Activated B cell treated with CpG ODN at 0.5 μM for 24 hours (primary cell): ENCODE measurements at regions of chr9 and their contacts with region 1.

Region 1: GRCh38 chr9:98255578-98256296 is at the start of gene TBC1D2:
- DNase-seq: peak; percentile 98
- ATAC-seq: peak; percentile 90
- H3K4me3 Mint-ChIP-seq: peak within 1 kb of the TSS; percentile 98
- H3K27ac Mint-ChIP-seq: peak within 1 kb of the TSS; percentile 99
- H3K4me1 Mint-ChIP-seq: peaks cover 13% of the 10 kb centered on the region
- H3K27me3 Mint-ChIP-seq: no peaks in the 10 kb centered on the region
- CTCF ChIP-seq: no peak
- total RNA-seq, gene TBC1D2: 2.1 and 2.7 TPM in 2 replicates

Region 2: DNA sequence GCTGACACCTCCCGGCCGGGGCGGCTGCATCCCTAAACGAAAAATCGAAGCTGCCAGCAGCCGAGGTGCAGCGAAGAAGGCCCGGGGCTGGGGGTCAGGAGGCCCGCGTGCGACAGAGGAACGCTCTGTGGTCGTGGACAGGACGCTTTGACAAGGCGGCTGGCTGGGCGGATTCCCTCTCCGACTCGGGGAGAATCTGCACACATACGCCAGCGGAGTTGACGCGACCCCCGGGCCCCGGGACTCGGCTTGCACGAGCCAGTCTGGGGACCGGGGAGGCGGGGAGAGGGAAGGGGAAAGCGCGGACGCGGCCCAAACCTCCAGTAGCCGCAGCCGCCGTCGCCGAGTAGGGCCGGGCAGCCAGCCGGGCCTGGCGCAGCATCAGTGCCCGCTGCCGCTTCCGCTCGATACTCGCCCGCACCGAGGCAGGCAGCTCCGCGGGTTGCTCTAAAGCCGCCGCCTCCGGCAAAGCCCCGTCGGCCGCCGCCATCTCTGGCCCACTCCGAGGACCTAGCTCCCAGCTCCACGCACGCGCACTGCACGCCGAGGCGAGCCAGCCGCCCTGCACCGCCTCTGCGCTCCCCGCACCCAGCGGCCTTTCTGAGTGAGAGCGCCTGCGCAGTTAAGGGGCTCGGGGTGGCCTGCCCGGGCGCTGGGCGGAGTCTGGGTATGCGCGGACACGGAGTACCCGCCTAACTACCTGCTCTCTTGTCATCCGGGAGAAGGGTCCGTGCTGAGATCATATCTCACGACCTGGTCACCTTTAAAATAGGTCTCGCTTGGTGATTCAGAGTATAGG is 558.7 kb before region 1 on chr9 and contains the start of gene XPA:
- CTCF ChIA-PET with region 1: no interaction called
- POLR2A ChIA-PET with region 1: interaction called, 7 read pairs
- intact Hi-C with region 1: loop called (anchors 1 kb)
- DNase-seq: peak; percentile 96
- ATAC-seq: peak; percentile 93
- H3K4me3 Mint-ChIP-seq: peak within 1 kb of the TSS; percentile 90
- H3K27ac Mint-ChIP-seq: peak within 1 kb of the TSS; percentile 94
- H3K4me1 Mint-ChIP-seq: peaks cover 60% of the 10 kb centered on the region
- H3K27me3 Mint-ChIP-seq: peaks cover 5% of the 10 kb centered on the region
- CTCF ChIP-seq: no peak
- total RNA-seq, gene XPA: 14.4 and 18.1 TPM in 2 replicates

Region 3: GRCh38 chr9:98045234-98046179 is 210.2 kb before region 1 on chr9:
- CTCF ChIA-PET with region 1: no interaction called
- POLR2A ChIA-PET with region 1: interaction called, 8 read pairs
- intact Hi-C with region 1: loop called (anchors 1 kb)
- DNase-seq: no peak
- ATAC-seq: peak; percentile 87
- H3K4me3 Mint-ChIP-seq: peak overlapping the region; percentile 83
- H3K27ac Mint-ChIP-seq: peak overlapping the region; percentile 84
- H3K4me1 Mint-ChIP-seq: peaks cover 53% of the 10 kb centered on the region
- H3K27me3 Mint-ChIP-seq: peaks cover under 1% of the 10 kb centered on the region
- CTCF ChIP-seq: no peak

Region 4: GRCh38 chr9:98074115-98074990 is 181.4 kb before region 1 on chr9:
- CTCF ChIA-PET with region 1: interaction called, 3 read pairs
- POLR2A ChIA-PET with region 1: interaction called, 11 read pairs
- intact Hi-C with region 1: no loop called
- DNase-seq: peak; percentile 58
- ATAC-seq: peak; percentile 61
- H3K4me3 Mint-ChIP-seq: no peak overlapping the region
- H3K27ac Mint-ChIP-seq: peak overlapping the region; percentile 24
- H3K4me1 Mint-ChIP-seq: peaks cover 6% of the 10 kb centered on the region
- H3K27me3 Mint-ChIP-seq: no peaks in the 10 kb centered on the region
- CTCF ChIP-seq: peak; percentile 91

Region 5: DNA sequence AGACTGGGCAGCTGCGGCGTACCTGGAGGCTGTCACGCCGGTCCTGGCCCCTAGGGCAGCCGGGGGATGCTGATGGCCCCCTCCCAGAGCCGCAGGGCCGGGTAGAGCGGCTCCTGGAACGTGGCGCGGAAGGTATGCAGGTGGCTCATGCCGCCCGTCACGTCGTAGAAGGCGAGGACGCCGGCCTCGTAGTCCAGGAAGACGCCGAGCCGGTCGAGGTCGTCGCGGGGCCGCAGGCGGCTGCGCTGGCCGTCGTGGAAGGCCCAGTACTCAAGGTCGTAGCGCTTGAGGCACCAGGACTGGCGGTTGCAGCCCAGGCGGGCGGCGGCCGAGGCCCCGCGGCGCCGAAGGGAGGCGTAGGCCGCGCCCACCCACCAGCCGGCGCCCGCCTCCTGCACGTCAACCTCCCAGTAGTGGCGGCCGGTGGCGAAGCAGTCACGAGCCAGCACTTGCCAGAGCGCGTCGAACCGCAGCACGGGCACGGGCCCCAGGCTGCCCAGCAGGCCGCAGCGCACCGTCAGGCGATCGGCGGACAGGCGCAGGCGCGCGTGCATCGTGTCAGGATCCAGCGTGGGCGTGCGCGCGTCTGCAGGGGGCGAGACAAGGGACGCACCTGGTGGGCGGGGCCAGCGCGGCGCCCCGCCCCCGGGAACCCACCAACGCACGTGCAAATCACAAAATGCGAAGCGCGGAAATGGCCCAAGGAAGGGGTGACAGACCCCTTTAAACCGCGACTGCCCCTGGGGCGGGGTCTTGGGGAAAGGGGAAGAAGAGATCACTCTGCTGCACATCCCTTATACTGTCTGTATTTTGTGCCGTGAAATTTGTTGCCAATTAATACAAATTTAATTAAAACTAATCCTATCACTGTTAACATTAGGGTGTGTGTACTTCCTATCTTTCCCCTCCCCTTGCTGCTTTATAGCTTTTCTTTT is 168.1 kb before region 1 on chr9:
- CTCF ChIA-PET with region 1: no interaction called
- POLR2A ChIA-PET with region 1: no interaction called
- intact Hi-C with region 1: loop called (anchors 5 kb)
- DNase-seq: peak; percentile 74
- ATAC-seq: peak; percentile 84
- H3K4me3 Mint-ChIP-seq: peak overlapping the region; percentile 74
- H3K27ac Mint-ChIP-seq: peak overlapping the region; percentile 50
- H3K4me1 Mint-ChIP-seq: peaks cover 25% of the 10 kb centered on the region
- H3K27me3 Mint-ChIP-seq: no peaks in the 10 kb centered on the region
- CTCF ChIP-seq: no peak

Region 6: DNA sequence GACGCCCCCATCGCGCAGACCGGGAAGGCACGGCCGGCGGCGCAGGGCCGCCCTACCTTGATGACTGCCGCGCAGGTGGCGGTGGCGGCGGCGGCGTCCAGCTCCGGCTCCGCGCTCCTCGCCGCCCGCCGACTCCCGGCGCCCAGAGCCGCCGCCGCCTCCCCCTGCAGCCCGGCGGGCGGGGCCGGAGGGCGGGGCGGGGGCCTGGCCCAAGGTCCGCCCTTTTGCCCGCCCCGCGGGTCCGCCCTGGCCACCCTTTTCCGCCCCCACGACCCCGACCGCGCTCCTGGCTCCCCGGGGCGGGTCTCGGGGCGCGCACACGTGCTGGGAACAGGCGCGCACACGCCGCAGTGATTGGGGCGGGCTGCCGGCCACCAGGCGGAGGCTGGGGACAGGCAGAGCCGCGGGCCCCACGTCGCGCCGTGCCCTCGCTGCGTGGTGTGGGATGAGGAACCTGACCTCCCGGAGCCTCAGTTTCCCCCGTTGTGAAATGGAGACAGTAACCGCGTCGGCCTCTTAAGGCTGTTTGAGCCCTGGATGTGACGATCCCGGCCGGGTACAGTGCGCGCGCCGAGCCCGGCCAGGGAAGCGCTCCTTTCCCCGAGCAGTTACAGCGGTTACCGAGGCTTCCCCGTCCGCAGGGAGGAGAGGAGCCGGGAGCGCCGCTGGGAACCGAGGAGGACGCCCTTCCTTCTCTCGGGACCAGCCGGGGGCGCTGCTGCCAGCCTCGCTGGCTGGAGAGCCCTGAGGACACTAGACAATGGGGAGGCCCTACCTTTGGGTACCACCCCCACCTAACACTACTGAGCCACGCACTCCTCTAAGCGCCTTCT is 63.0 kb before region 1 on chr9 and contains the start of gene CORO2A:
- CTCF ChIA-PET with region 1: interaction called, 3 read pairs
- POLR2A ChIA-PET with region 1: interaction called, 10 read pairs
- intact Hi-C with region 1: loop called (anchors 2 kb)
- DNase-seq: peak; percentile 70
- ATAC-seq: peak; percentile 91
- H3K4me3 Mint-ChIP-seq: peak within 1 kb of the TSS; percentile 88
- H3K27ac Mint-ChIP-seq: no peak within 1 kb of the TSS
- H3K4me1 Mint-ChIP-seq: peaks cover 5% of the 10 kb centered on the region
- H3K27me3 Mint-ChIP-seq: no peaks in the 10 kb centered on the region
- CTCF ChIP-seq: no peak
- total RNA-seq, gene CORO2A: 0.59 and 0.78 TPM in 2 replicates

Region 7: DNA sequence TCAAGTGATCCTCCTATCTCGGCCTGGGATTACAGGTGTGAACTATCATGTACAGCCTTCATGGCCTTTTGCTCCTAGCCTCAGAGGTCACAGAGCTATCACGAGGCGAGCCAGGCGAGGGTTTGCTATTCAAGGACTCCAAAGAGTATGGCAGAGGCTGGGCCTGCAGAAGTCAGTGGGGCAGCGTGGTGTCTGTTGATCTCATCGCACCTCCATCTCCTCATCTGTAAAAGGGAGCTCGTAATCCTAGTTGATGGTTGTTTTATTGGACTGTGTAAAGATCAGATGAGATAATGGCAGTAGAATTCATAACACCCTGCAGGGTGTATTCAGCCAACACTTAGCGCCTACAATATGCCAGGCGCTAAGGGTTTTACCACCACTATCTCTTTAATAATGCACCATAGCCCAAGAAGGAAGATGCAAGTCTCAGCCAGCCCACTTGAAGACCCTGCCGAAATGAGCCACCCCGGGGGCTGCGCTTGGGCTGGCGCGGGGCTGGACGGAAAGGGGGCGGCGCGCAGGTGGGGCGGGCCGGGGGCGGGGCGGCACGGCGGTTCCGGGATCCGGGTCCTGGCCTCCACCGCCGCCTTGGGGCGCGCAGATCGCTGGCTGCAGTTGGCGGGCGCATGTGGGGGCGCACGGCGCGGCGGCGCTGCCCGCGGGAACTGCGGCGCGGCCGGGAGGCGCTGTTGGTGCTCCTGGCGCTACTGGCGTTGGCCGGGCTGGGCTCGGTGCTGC is 551.5 kb after region 1 on chr9 and contains the start of gene GALNT12:
- CTCF ChIA-PET with region 1: no interaction called
- POLR2A ChIA-PET with region 1: interaction called, 12 read pairs
- intact Hi-C with region 1: no loop called
- DNase-seq: peak; percentile 43
- ATAC-seq: peak; percentile 84
- H3K4me3 Mint-ChIP-seq: peak within 1 kb of the TSS; percentile 86
- H3K27ac Mint-ChIP-seq: peak within 1 kb of the TSS; percentile 18
- H3K4me1 Mint-ChIP-seq: peaks cover 18% of the 10 kb centered on the region
- H3K27me3 Mint-ChIP-seq: peaks cover 15% of the 10 kb centered on the region
- CTCF ChIP-seq: no peak
- total RNA-seq, gene GALNT12: 2.0 and 2.5 TPM in 2 replicates